Activated naive CD4-positive, alpha-beta T cell treated with anti-CD3 and anti-CD28 coated beads, Interleukin-2, amount 10 ng/mL, durations not matched to agents 7 days and 5 days (primary cell): ENCODE measurements at regions of chr7 and their contacts with region 1.

Region 1: GRCh38 chr7:150988230-150989226 is 2.3 kb upstream of the NOS3 start:
- DNase-seq: peak; percentile 81
- H3K4me3 Mint-ChIP-seq: peak overlapping the region; percentile 54
- H3K27ac Mint-ChIP-seq: no peak overlapping the region
- H3K4me1 Mint-ChIP-seq: peaks cover 45% of the 10 kb centered on the region
- H3K27me3 Mint-ChIP-seq: peaks cover 66% of the 10 kb centered on the region

Region 2: DNA sequence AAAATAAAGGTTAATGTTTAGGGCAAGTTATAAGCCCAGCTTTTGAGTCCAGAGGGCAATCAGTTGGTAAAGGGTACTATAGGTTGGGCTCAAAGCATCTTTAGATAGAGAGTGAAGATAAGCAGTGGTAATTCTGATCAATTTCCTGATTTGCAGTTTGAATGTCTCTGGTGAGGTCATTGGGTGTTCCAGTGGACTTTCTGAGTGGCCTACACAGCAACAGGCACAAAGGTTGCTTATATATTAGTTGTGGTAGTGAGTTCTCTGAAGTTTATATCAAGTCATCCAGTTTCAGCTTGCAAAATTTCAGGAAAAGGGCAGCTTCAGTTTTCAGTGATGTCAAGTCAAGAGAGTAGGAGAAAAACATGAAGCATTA is 222.2 kb before region 1 on chr7:
- CTCF ChIA-PET with region 1: no interaction called
- DNase-seq: no peak
- H3K4me3 Mint-ChIP-seq: no peak overlapping the region
- H3K27ac Mint-ChIP-seq: no peak overlapping the region
- H3K4me1 Mint-ChIP-seq: no peaks in the 10 kb centered on the region
- H3K27me3 Mint-ChIP-seq: peaks cover 5% of the 10 kb centered on the region

Region 3: DNA sequence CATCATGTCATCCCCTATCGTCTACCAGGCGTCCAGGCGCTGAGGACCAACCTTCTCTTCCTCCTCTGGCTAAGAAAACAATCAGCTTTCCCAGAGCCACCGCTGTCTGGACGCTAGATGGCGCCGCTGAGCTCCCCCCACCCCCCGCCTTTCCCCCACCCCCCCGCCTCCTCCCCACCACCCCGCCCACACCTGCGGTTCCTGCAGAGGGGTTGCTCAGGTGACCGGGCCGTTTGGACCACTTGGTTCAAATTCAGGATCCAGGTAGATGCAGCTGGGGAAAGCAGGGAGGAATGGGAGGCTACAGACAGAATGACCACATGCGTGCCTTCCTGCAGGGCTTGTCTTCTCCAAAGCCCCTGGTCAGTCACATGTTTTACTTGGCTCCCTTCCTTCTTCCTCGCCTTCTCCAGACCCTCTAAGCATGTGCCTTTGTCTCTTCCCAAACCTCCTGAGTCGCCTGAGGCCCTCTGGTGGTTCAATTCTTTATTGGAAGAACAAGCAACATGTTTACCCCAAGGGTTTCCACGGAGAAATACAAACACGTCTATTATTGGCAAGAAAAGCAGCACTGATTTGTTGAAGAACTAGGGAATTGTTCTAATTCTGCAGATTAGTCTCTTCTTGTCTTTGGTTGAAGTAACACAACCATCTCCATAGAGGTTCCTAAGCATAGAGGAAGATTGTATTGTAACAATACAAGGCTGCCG is 111.6 kb before region 1 on chr7:
- CTCF ChIA-PET with region 1: interaction called, 10 read pairs
- DNase-seq: peak; percentile 56
- H3K4me3 Mint-ChIP-seq: no peak overlapping the region
- H3K27ac Mint-ChIP-seq: no peak overlapping the region
- H3K4me1 Mint-ChIP-seq: peaks cover 5% of the 10 kb centered on the region
- H3K27me3 Mint-ChIP-seq: peaks cover 48% of the 10 kb centered on the region

Region 4: DNA sequence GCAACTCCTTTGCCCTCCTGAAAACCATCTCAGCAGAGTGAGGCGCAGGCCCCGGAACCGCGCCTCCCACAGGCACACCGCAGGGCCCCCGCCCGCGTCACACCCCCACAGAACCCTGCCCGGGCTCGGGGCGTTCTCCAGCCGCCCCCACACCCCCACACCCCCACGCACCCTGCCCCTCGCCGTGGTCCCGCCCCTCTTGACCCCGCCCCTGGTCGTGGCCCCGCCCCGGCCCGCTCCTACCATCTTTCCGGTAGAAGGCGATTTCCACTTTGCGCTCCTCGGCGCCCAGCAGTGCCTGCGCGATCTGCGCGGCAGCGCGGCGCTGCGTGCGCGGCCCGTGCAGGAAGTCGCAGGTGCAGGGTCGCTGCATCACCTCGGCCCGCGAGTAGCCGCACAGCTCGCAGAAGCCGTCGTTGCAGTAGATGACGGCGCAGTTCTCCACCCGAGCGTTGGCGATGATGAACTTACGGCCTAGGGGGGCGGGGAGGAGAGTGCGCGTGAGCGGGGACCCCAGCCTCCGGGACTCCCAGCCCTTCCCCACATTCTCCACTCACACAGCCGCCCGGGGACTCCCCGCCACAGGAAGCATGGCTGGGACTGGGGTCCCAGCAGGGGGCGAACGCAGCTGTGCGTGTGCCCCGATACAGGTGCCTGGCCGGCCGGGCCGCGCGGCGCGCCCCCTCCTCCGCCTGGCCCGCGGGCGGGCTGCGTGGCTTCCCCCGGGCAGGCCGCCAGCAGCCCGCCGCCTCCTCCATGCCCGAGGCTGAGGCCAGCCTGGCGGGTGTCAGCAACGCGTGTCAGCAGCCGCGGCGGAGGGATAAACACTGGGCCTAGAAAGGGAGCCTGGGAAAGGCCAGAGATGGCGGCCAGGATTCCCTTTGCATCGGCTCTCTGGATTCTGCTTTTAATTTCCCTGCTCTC is 13.8 kb before region 1 on chr7:
- CTCF ChIA-PET with region 1: interaction called, 16 read pairs
- DNase-seq: peak; percentile 89
- H3K4me3 Mint-ChIP-seq: peak overlapping the region; percentile 78
- H3K27ac Mint-ChIP-seq: peak overlapping the region; percentile 84
- H3K4me1 Mint-ChIP-seq: peaks cover 56% of the 10 kb centered on the region
- H3K27me3 Mint-ChIP-seq: peaks cover 73% of the 10 kb centered on the region

Region 5: DNA sequence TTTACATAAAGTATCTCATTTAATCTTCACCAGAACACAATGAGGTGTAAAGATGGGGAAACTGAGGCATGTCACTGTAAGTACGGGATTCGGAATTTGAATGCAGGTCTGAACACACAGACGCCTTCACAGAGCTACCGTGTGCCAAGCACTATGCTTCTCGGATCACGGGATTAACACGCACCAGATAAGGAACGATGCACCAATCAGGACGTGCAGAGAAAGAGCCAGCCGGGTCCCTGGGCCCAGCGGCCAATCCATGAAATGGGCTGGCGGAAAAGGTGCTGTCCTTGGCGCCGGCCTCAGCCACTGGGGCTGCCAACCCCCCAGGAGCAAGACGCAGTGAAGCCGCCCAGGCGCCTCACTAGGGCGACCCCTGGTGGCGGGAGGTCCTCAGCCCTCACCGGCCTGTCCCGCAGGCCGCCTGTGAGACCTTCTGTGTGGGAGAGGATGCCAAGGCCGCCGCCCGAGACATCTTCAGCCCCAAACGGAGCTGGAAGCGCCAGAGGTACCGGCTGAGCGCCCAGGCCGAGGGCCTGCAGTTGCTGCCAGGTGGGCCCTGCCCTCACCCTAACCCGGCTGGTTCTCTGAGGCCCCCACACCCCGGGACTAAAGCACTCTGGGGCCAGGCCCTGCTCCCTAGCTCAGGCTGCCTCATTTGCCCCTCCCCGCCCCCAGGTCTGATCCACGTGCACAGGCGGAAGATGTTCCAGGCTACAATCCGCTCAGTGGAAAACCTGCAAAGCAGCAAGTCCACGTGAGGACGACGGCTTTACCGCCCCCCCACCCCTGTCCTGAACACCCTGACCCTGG is 20.2 kb after region 1 on chr7:
- CTCF ChIA-PET with region 1: interaction called, 21 read pairs
- DNase-seq: peak; percentile 72
- H3K4me3 Mint-ChIP-seq: peak overlapping the region; percentile 65
- H3K27ac Mint-ChIP-seq: peak overlapping the region; percentile 90
- H3K4me1 Mint-ChIP-seq: peaks cover 71% of the 10 kb centered on the region
- H3K27me3 Mint-ChIP-seq: no peaks in the 10 kb centered on the region

Region 6: GRCh38 chr7:151017953-151018420 is 29.5 kb after region 1 on chr7:
- CTCF ChIA-PET with region 1: interaction called, 27 read pairs
- DNase-seq: peak; percentile 86
- H3K4me3 Mint-ChIP-seq: peak overlapping the region; percentile 74
- H3K27ac Mint-ChIP-seq: peak overlapping the region; percentile 68
- H3K4me1 Mint-ChIP-seq: peaks cover 68% of the 10 kb centered on the region
- H3K27me3 Mint-ChIP-seq: peaks cover 51% of the 10 kb centered on the region

Region 7: GRCh38 chr7:151046603-151047504 is 58.3 kb after region 1 on chr7:
- CTCF ChIA-PET with region 1: no interaction called
- DNase-seq: no peak
- H3K4me3 Mint-ChIP-seq: no peak overlapping the region
- H3K27ac Mint-ChIP-seq: peak overlapping the region; percentile 19
- H3K4me1 Mint-ChIP-seq: peaks cover 11% of the 10 kb centered on the region
- H3K27me3 Mint-ChIP-seq: peaks cover 25% of the 10 kb centered on the region